ENCODE measurements at regions of chr1 and their contacts with region 1.

Region 1: DNA sequence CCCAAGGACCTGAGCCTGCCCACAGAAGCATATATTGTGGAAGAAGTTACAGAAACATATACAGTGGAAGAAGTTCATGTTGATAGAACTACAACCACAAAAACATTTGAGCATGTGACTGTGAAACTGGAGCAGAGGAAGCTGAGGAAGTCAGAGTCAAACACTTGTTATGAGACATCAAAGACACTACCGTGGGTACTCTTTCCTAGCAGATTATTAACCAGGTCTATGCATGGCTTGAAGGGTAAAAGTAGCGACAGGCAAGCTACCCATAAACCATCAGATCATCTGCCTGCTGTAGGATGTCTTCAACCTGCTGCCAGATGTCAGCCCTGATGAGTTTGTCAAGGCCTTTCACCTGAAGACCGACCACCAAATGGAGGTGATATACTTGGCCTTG is 35.8 kb downstream of the IVNS1ABP start:
- DNase-seq: no peak
- ATAC-seq: no peak
- H3K4me3 ChIP-seq: no peak overlapping the region
- H3K27ac ChIP-seq: peak overlapping the region; percentile 62
- H3K4me1 ChIP-seq: peaks cover 26% of the 10 kb centered on the region
- H3K27me3 ChIP-seq: no peaks in the 10 kb centered on the region
- CTCF ChIP-seq: no peak

Region 2: DNA sequence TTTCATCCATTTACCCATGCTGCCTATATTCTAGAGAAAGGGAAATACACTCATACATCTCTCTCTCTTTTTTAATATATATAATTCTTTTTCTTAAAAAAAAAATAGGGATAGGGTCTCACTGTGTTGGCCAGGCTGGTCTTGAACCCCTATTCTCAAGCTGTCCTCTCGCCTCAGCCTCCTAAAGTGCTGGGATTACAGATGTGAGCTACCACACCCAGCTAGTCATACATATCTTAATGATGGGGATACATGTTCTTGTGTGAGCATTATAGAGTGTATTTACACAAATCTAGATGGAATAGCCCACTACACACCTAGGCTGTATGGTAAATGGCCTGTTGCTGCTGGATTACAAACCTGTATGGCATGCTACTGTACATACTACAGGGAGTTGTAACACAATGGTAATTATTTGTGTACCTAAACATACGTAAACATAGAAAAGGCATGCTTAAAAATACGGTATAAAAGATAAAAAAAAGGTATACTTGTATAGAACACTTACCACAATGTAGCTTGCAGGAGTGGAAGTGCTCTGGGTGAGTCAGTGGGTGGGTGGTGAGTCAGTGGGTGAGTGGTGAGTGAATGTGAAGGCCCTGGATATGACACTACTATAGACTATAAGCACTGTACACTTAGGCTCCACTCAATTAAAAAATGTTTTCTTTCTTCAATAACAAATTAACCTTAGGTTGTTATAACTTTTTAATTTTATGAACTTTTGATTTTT is 37.1 kb before region 1 on chr1:
- CTCF ChIA-PET with region 1: no interaction called
- POLR2A ChIA-PET with region 1: no interaction called
- intact Hi-C with region 1: loop called (anchors 1 kb)
- DNase-seq: peak; percentile 77
- ATAC-seq: peak; percentile 100
- H3K4me3 ChIP-seq: no peak overlapping the region
- H3K27ac ChIP-seq: peak overlapping the region; percentile 50; the same call in 1 of the 2 replicates
- H3K4me1 ChIP-seq: peaks cover 9% of the 10 kb centered on the region
- H3K27me3 ChIP-seq: no peaks in the 10 kb centered on the region
- CTCF ChIP-seq: no peak

Region 3: GRCh38 chr1:185257947-185258203 is 23.4 kb before region 1 on chr1:
- CTCF ChIA-PET with region 1: no interaction called
- POLR2A ChIA-PET with region 1: no interaction called
- intact Hi-C with region 1: no loop called
- DNase-seq: peak; percentile 49
- ATAC-seq: peak; percentile 77
- H3K4me3 ChIP-seq: peak overlapping the region; percentile 65
- H3K27ac ChIP-seq: peak overlapping the region; percentile 34
- H3K4me1 ChIP-seq: peaks cover 32% of the 10 kb centered on the region
- H3K27me3 ChIP-seq: no peaks in the 10 kb centered on the region
- CTCF ChIP-seq: no peak

Region 4: DNA sequence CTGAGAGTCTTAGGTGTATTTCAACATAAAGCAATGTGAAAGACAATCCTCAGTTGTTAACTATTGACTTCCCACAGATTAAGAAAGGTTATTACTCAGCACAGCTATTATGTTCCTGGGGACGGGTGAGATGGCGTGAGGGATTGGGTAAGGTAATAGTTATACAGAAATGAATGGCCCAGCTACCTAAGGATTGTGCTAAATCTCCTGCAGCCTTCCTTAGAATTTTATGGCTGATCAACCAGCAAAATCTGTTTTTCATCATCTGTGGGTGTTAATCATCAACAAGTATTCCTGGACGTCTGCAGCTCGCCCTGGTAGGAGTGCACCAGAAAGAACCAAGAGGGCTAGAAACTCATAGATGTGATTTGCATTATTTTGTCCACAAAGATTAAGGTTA is 181.8 kb after region 1 on chr1:
- CTCF ChIA-PET with region 1: no interaction called
- POLR2A ChIA-PET with region 1: no interaction called
- intact Hi-C with region 1: no loop called
- DNase-seq: no peak
- ATAC-seq: no peak
- H3K4me3 ChIP-seq: no peak overlapping the region
- H3K27ac ChIP-seq: no peak overlapping the region
- H3K4me1 ChIP-seq: no peaks in the 10 kb centered on the region
- H3K27me3 ChIP-seq: no peaks in the 10 kb centered on the region
- CTCF ChIP-seq: no peak

Region 5: DNA sequence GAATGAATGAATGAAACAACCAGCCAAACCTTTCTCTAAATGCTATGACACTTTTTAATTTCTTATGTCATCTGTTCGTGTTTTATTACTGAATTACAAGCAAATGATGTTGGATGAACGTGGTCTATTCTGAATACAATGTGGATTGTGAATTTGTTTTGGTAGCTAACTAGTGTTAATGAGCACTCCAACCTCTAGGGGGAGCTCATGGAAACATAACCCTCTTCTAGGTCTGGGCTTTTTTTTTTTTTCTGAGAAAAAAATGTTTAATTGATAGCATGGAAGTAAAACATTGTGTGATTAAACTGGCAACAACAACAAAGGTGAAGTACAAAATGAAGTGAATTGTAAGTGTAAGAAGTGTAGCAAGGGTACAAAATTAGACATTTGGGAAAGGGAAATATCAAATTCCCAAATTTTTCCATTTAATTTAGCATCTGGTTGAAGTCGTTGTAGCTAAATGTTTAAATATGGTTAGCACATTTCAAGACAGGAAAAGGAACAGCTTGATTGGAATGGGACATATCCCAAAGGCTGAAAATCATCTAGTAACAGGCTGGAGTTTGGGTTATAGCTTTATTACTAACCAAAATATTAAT is 1441.6 kb after region 1 on chr1:
- CTCF ChIA-PET with region 1: no interaction called
- POLR2A ChIA-PET with region 1: no interaction called
- intact Hi-C with region 1: no loop called
- DNase-seq: peak; percentile 57
- ATAC-seq: no peak
- H3K4me3 ChIP-seq: no peak overlapping the region
- H3K27ac ChIP-seq: no peak overlapping the region
- H3K4me1 ChIP-seq: no peaks in the 10 kb centered on the region
- H3K27me3 ChIP-seq: no peaks in the 10 kb centered on the region
- CTCF ChIP-seq: peak; percentile 70

Measured in PC-3 (cell line).